Right ventricle myocardium inferior (tissue), 1 donor: ENCODE measurements at regions of chr2 and their contacts with region 1.

Region 1: GRCh38 chr2:201171259-201171814 is 11.6 kb upstream of the CASP10 start:
- DNase-seq: no peak
- ATAC-seq: no peak

Region 2: DNA sequence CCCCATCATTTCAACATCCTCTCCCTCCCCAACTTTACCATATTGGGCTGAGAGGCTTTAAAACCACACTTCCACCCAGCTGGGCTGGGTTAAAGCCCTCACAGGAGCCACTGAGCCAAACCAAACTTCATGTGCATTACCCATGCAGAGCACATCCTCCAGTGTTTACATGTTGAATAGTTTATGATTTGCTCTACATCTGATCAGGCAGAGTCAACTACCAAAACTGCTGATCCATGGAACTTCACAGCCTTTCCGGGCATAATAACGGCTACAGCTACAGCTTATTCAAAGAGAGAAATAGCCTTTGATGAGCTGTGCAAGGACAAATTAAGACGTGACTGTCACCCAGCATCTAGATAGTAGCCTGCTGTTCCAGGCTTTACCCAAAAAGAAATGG is 1177.0 kb before region 1 on chr2:
- intact Hi-C with region 1: no loop called
- DNase-seq: no peak
- ATAC-seq: no peak

Region 3: DNA sequence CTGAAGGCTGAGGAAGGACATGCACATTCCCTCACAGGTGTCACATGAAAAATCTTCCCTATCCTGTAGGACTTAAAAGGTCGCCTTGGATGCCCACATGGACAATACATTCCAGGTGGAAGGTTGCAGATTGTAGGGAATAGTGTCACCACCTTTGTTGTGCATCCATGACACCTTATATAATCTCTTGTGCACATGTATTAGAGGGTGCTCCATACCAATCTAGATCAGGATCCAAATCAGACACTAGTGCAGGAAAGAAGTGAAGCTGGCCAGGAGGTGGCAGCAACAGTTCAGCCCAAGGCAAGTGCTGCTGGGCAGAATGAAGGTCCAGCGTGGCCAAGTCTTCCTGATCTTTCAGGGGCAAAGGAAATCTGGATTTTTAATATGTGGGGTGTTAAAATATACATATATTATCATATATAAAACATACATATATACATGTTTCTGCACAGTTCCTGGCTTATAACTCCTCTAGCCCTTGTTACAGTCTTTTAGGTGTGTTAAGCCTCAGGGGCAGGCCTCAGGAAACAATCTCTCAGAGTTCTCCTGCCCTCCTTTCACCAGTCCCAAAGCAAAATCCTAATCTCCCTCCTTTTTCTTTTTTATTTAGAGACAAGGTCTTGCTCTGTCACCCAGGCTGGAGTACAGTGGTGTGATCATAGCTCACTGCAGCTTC is 265.6 kb before region 1 on chr2:
- intact Hi-C with region 1: loop called (anchors 2 kb)
- DNase-seq: peak; percentile 77
- ATAC-seq: peak; percentile 72

Region 4: DNA sequence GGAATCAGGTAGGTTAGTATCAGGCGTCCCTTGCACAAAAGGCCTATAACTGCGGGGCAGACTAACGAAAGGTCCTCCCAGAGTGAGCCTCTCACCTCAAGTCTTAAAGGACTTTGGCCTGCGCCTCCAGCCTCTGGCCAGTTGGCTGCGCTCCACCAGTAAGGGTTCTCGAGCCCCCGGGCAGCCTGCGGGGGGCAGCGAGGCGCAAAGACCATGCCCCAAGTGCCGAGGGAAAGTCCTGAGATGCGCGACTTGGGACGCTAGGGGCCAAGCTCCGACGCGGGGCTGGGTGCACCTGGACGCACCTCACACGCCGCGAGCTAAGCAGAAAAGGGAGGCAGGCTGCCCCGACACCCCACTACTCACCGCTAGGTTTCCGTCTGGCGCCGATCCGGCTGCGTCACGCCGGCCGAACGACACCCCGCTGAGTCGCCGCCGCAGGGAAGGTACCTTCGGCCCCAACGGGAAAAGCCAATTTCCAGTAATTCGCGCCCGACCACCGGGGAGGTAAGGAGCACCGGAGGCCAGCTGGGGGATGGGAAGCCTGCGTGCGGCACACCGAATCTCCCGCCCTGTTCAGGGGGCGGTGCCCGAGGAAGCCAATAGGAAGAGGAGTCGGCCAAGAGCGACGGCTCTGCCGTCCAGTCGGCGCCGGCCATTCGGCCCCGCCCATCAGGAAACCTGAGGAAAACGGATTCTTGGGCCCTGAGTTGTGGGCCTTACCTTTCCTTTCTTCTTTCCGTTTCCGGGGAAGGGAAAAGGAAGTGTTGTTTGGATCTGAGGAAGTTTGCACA is 208.0 kb before region 1 on chr2 and contains the start of gene ORC2:
- intact Hi-C with region 1: loop called (anchors 5 kb)
- DNase-seq: peak; percentile 95
- ATAC-seq: peak; percentile 99
- total RNA-seq, gene ORC2: 20.3 TPM

Region 5: GRCh38 chr2:201320701-201321100 is 149.4 kb after region 1 on chr2:
- intact Hi-C with region 1: no loop called
- DNase-seq: no peak
- ATAC-seq: no peak